IMR-90 (cell line): ENCODE measurements at regions of chr20 and their contacts with region 1.

Region 1: DNA sequence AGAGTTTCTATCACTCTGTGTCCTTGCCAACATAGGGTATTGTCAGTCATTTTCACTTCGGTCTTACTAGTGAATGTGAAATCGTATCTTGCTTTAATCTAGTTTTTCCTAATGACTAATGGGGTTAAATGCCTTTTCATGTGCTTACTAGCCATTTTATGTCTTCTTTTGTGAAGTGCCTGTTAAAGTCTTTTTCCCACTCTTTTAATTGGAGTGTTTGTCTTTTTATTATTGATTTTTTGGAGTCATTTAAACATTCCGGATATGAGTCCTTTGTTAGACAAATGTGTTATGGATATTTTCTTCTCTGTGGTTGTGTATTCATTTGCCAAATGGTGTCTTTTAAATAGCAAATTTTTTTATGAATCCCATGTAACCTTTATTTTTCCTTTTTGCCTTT is 194.6 kb downstream of the CDH26 start:
- DNase-seq: no peak
- ATAC-seq: no peak
- H3K4me3 ChIP-seq: no peak overlapping the region
- H3K27ac ChIP-seq: no peak overlapping the region
- H3K4me1 ChIP-seq: no peaks in the 10 kb centered on the region
- H3K27me3 ChIP-seq: no peaks in the 10 kb centered on the region
- CTCF ChIP-seq: no peak
- POLR2A ChIP-seq: no peak
- RAD21 ChIP-seq: no peak

Region 2: DNA sequence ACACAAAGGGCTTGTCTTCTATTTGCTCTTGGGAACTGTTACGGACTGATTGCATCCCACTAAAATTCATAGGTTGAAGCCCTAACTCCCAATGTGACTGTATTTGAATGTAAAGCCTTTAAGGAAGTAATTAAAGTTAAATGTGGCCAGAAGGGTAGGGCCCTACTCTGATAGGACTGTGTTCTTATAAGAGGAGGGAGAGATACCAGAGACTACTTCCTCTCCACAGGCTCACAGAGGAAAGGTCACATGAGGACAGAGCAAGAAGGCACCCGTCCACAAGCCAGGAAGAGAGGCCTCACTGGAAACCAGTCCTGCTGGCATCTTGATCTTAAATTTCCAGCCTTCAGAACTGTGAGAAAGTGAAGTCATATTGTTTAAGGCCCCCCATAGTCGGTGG is 17.3 kb after region 1 on chr20:
- CTCF ChIA-PET with region 1: interaction called, 3 read pairs
- POLR2A ChIA-PET with region 1: no interaction called
- dilution Hi-C with region 1: no loop called
- in situ Hi-C with region 1: no loop called
- intact Hi-C with region 1: loop called (anchors 1 kb)
- DNase-seq: no peak
- ATAC-seq: no peak
- H3K4me3 ChIP-seq: no peak overlapping the region
- H3K27ac ChIP-seq: no peak overlapping the region
- H3K4me1 ChIP-seq: no peaks in the 10 kb centered on the region
- H3K27me3 ChIP-seq: no peaks in the 10 kb centered on the region
- CTCF ChIP-seq: no peak
- POLR2A ChIP-seq: no peak
- RAD21 ChIP-seq: no peak

Region 3: DNA sequence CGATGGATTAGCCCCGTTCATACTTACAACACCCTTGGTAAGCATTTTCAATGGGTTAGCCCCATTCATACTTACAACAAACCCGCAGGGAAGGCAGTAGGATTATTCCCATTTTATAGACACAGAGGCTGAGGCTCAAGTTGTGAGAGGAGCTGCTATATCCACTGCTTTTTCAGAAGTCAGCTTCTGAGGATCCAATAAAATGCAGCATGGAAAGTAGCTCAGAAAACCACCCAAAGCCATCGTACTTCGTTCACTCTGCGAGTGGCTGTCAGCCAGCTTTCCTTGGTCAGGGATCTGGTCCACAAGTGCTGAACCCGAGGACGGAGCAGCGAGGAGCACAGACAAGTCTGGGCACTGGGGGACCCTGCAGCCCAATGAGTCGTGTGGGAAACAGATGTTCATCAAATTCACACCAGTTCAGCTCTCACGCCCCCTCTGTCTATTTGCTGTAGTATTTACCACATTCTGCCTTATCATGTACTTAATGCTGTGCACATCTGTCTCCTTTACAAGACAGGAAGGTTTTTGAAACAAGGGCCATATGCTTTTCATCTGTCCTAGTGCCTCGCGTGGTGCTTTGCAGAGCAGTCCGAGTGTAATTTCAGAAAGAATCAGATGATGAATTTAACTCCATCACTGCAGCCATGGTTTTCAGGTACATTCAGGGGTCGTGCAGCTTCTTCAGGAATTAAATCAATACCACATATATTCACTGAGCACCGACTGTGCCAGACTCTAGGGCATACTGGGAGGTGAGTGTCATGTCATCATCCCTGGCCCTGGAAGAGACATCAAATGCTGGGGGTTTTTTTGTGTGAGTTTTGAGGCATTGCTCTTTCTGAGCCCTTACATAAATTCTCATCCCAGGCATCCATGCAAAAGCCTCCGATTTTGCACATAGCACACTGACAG is 62.4 kb after region 1 on chr20:
- CTCF ChIA-PET with region 1: no interaction called
- POLR2A ChIA-PET with region 1: no interaction called
- dilution Hi-C with region 1: no loop called
- in situ Hi-C with region 1: no loop called
- intact Hi-C with region 1: no loop called
- DNase-seq: no peak
- ATAC-seq: no peak
- H3K4me3 ChIP-seq: no peak overlapping the region
- H3K27ac ChIP-seq: no peak overlapping the region
- H3K4me1 ChIP-seq: no peaks in the 10 kb centered on the region
- H3K27me3 ChIP-seq: peaks cover 2% of the 10 kb centered on the region; the same call in 1 of the 2 replicates
- CTCF ChIP-seq: no peak
- POLR2A ChIP-seq: no peak
- RAD21 ChIP-seq: no peak